ENCODE measurements at regions of chr14 and their contacts with region 1.

Region 1: DNA sequence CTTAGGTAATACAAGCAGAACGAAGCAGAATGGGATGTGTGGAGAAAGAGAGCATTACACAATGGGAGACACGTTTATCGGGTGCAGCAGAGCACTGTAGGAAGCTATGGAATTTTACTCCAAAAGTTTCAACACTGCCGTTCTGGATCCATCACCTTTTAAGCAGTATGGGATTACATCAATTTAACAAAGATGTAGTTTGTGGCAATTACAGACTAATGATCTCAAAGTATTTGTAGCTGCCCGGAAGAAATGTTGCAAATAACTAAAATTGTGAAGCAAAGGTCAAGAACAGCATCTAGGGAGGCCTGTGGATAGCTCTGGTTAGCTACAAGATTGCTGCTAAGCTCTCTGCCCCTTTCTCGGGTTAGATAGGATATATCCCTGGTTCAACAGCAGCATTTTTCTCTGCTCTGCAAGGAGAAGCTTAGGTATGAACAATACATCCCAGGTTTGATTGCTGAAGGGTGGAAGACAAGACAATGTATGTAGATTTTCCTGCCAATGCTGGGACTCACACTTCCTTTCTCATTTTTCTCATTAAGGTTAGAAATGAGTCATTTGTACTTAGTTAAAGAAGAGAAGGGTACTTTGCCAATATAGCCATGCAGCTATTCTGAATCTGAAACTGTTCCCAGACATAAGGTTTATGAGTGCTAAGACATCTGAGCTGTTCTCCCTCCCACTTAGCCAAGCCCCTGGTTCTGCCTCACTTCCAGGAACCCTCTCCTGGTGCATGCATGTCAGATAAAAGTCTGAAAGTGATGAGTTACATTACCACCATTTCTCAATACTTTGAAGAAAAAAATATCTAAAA is 75.0 kb upstream of the HIF1A start:
- DNase-seq: no peak
- H3K4me3 Mint-ChIP-seq: no peak overlapping the region
- H3K27ac Mint-ChIP-seq: peak overlapping the region; percentile 31
- H3K4me1 Mint-ChIP-seq: peaks cover 54% of the 10 kb centered on the region
- H3K27me3 Mint-ChIP-seq: no peaks in the 10 kb centered on the region

Region 2: GRCh38 chr14:61561657-61562276 is 58.6 kb before region 1 on chr14:
- intact Hi-C with region 1: loop called (anchors 2 kb)
- DNase-seq: no peak
- H3K4me3 Mint-ChIP-seq: peak overlapping the region; percentile 37
- H3K27ac Mint-ChIP-seq: peak overlapping the region; percentile 27
- H3K4me1 Mint-ChIP-seq: peaks cover 70% of the 10 kb centered on the region
- H3K27me3 Mint-ChIP-seq: no peaks in the 10 kb centered on the region

Region 3: DNA sequence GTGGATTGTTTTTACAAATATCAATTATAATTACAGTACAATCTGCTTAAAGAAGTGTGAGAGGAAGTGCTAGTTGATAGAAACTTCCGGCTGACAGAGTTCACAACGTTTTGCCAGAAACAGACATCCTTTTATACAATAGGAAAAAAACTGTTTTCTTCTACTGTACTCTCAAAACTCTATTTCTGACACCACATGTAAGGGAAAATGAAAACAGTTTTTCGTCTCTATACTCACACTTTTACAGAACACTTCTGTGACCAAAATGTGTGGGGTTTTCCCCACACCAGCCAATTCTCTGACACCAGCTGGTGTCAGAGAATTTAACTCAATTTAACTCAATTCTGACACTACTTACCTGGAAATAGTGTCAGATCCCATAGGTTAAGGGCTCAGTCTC is 50.7 kb after region 1 on chr14:
- intact Hi-C with region 1: loop called (anchors 1 kb)
- DNase-seq: peak; percentile 42
- H3K4me3 Mint-ChIP-seq: no peak overlapping the region
- H3K27ac Mint-ChIP-seq: no peak overlapping the region
- H3K4me1 Mint-ChIP-seq: peaks cover 9% of the 10 kb centered on the region
- H3K27me3 Mint-ChIP-seq: no peaks in the 10 kb centered on the region

Measured in activated T-helper 1 cell treated with anti-CD3 and anti-CD28 coated beads, Interleukin-12 subunit alpha, Interleukin-12 subunit beta, Interleukin-2, Interleukin-4 antibody, amounts not matched to agents 30 ng/mL and 10 ng/mL and 1 ng/mL, durations not matched to agents 14 hours and 24 hours and 36 hours (primary cell).